Activated CD4-positive, alpha-beta T cell treated with anti-CD3 and anti-CD28 coated beads for 36 hours (primary cell): ENCODE measurements at regions of chr17 and their contacts with region 1.

Region 1: GRCh38 chr17:70552230-70552981 is 383.1 kb downstream of the KCNJ2 start:
- DNase-seq: no peak
- ATAC-seq: no peak
- H3K4me3 Mint-ChIP-seq: no peak overlapping the region
- H3K27ac Mint-ChIP-seq: no peak overlapping the region
- H3K4me1 Mint-ChIP-seq: no peaks in the 10 kb centered on the region
- H3K27me3 Mint-ChIP-seq: no peaks in the 10 kb centered on the region

Region 2: DNA sequence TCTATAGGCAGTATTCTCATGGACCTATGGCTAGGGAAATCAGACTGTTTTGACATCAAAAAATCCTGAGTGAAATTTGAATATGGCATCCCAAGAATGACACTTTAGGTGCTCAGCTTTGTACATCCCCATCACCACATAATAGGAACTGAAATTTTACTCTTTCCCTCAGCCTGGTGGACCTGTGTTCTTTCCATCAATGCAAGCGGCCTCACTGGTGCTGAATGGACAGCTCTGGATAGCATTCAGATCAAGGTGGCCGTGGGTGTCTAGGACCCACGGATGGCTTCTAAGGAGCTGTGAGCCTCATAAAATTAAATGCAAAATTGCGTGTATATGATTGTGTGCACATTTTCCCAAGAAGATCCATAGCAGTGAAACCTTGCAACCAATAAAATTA is 985.3 kb before region 1 on chr17:
- CTCF ChIA-PET with region 1: interaction called, 8 read pairs
- POLR2A ChIA-PET with region 1: no interaction called
- intact Hi-C with region 1: loop called (anchors 5 kb)
- DNase-seq: peak; percentile 7
- ATAC-seq: no peak
- H3K4me3 Mint-ChIP-seq: no peak overlapping the region
- H3K27ac Mint-ChIP-seq: no peak overlapping the region
- H3K4me1 Mint-ChIP-seq: peaks cover 3% of the 10 kb centered on the region
- H3K27me3 Mint-ChIP-seq: peaks cover 8% of the 10 kb centered on the region

Region 3: DNA sequence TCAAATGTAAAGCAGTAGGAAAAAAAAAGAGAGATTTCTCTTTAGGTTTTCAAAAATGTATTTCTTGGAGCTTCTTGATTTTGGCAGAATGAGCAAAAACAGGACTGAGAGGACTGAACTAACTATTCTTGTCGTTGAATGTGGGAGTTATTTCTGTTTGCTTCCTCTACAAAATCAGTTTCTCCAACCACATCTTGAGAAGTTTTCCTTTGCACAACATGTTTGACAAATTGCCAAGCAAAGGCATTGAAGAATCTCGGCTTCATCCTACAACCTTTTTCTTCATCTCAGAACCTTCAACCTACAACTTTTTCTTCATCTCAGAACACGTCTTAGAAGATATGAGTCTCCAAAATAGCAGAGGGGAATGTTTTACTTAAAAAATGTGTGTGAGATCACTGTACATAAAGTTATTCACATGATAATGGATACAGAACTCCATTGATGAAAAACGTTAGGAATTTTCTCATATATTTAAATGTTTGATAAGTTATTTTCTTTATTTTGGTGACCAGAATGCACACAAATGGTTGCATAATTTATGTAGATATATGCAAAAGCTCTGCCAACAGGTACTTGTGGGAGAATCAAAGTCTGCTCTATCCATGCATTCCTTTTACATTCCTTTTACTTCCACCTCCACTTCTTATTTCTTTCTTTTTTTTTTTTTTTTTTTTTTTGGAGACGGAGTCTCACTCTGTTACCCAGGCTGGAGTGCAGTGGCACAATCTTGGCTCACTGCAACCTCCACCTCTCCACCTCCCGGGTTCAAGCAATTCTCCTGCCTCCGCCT is 13.1 kb before region 1 on chr17:
- CTCF ChIA-PET with region 1: no interaction called
- POLR2A ChIA-PET with region 1: no interaction called
- intact Hi-C with region 1: no loop called
- DNase-seq: no peak
- ATAC-seq: no peak
- H3K4me3 Mint-ChIP-seq: no peak overlapping the region
- H3K27ac Mint-ChIP-seq: no peak overlapping the region
- H3K4me1 Mint-ChIP-seq: no peaks in the 10 kb centered on the region
- H3K27me3 Mint-ChIP-seq: no peaks in the 10 kb centered on the region

Region 4: GRCh38 chr17:70563281-70563820 is 10.9 kb after region 1 on chr17:
- CTCF ChIA-PET with region 1: no interaction called
- POLR2A ChIA-PET with region 1: no interaction called
- intact Hi-C with region 1: no loop called
- DNase-seq: no peak
- ATAC-seq: no peak
- H3K4me3 Mint-ChIP-seq: no peak overlapping the region
- H3K27ac Mint-ChIP-seq: no peak overlapping the region
- H3K4me1 Mint-ChIP-seq: no peaks in the 10 kb centered on the region
- H3K27me3 Mint-ChIP-seq: peaks cover 4% of the 10 kb centered on the region

Region 5: GRCh38 chr17:70588003-70588402 is 35.6 kb after region 1 on chr17:
- CTCF ChIA-PET with region 1: no interaction called
- POLR2A ChIA-PET with region 1: no interaction called
- intact Hi-C with region 1: no loop called
- DNase-seq: no peak
- ATAC-seq: no peak
- H3K4me3 Mint-ChIP-seq: no peak overlapping the region
- H3K27ac Mint-ChIP-seq: no peak overlapping the region
- H3K4me1 Mint-ChIP-seq: no peaks in the 10 kb centered on the region
- H3K27me3 Mint-ChIP-seq: no peaks in the 10 kb centered on the region